Endothelial cell of umbilical vein (primary cell): ENCODE measurements at regions of chr17 and their contacts with region 1.

Region 1: GRCh38 chr17:66567234-66568170 is 265.1 kb downstream of the PRKCA start:
- DNase-seq: peak; percentile 97
- H3K4me3 ChIP-seq: no peak overlapping the region
- H3K27ac ChIP-seq: peak overlapping the region; percentile 90
- H3K4me1 ChIP-seq: peaks cover 16% of the 10 kb centered on the region
- H3K27me3 ChIP-seq: no peaks in the 10 kb centered on the region
- CTCF ChIP-seq: peak; percentile 90 to 93
- POLR2A ChIP-seq: no peak

Region 2: GRCh38 chr17:65813306-65813705 is 754.2 kb before region 1 on chr17:
- CTCF ChIA-PET with region 1: no interaction called
- POLR2A ChIA-PET with region 1: no interaction called
- dilution Hi-C with region 1: no loop called
- intact Hi-C with region 1: no loop called
- DNase-seq: no peak
- H3K4me3 ChIP-seq: no peak overlapping the region
- H3K27ac ChIP-seq: no peak overlapping the region
- H3K4me1 ChIP-seq: peaks cover 5% of the 10 kb centered on the region
- H3K27me3 ChIP-seq: no peaks in the 10 kb centered on the region
- CTCF ChIP-seq: no peak
- POLR2A ChIP-seq: no peak

Region 3: DNA sequence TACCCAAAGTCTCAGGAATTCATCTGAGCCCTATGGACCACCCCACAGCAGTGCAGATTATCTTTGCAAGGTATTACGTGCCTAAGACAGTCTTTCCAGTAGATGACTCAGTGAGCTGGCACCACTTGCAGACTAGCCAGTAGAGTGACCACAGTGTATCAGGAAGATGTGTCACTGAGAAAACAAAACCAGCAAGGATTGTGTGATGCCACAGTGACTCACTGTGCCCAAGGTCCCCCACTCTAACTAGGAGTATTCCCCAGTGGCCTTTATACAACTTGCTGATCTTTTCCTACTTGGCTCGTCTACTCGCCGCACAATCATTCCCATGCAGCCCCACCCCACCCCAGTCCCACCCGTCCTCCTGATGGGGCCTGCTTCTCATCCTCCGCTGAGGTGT is 291.9 kb before region 1 on chr17:
- CTCF ChIA-PET with region 1: interaction called, 10 read pairs
- POLR2A ChIA-PET with region 1: no interaction called
- dilution Hi-C with region 1: no loop called
- intact Hi-C with region 1: loop called (anchors 1 kb)
- DNase-seq: peak; percentile 90
- H3K4me3 ChIP-seq: no peak overlapping the region
- H3K27ac ChIP-seq: peak overlapping the region; percentile 87
- H3K4me1 ChIP-seq: peaks cover 30% of the 10 kb centered on the region
- H3K27me3 ChIP-seq: no peaks in the 10 kb centered on the region
- CTCF ChIP-seq: no peak
- POLR2A ChIP-seq: no peak

Region 4: DNA sequence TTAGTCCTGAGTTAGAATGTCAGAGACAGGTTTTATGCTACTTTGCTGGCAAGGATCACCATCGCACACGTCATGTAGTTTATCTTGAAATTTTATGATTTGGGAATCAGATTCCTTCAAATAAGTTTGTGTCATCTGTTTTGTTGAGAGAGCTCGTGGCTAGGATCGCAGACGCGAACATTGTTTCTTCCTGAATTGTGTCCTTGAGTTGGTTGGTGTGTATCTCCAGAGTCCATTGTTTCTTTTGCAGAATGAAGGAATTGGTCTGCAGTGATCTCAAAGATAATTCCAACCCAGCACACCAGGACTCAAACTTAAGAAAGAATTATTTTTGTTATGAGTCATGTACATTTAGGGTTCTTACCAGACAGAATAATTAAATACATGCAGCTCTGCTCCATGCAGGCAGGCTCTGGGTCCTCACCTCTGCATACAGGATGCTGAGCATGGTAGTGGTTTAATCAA is 213.5 kb before region 1 on chr17:
- CTCF ChIA-PET with region 1: interaction called, 7 read pairs
- POLR2A ChIA-PET with region 1: no interaction called
- dilution Hi-C with region 1: no loop called
- intact Hi-C with region 1: loop called (anchors 2 kb)
- DNase-seq: peak; percentile 79
- H3K4me3 ChIP-seq: no peak overlapping the region
- H3K27ac ChIP-seq: peak overlapping the region; percentile 9
- H3K4me1 ChIP-seq: peaks cover 28% of the 10 kb centered on the region
- H3K27me3 ChIP-seq: no peaks in the 10 kb centered on the region
- CTCF ChIP-seq: no peak
- POLR2A ChIP-seq: no peak

Region 5: GRCh38 chr17:66466840-66467367 is 100.6 kb before region 1 on chr17:
- CTCF ChIA-PET with region 1: interaction called, 9 read pairs
- POLR2A ChIA-PET with region 1: no interaction called
- dilution Hi-C with region 1: no loop called
- intact Hi-C with region 1: loop called (anchors 1 kb)
- DNase-seq: peak; percentile 94
- H3K4me3 ChIP-seq: peak overlapping the region in 2 of 3 experiments; percentile 20 to 24
- H3K27ac ChIP-seq: peak overlapping the region; percentile 64
- H3K4me1 ChIP-seq: peaks cover 44% of the 10 kb centered on the region
- H3K27me3 ChIP-seq: no peaks in the 10 kb centered on the region
- CTCF ChIP-seq: no peak
- POLR2A ChIP-seq: peak; percentile 48

Region 6: GRCh38 chr17:66580184-66580955 is 12.9 kb after region 1 on chr17:
- CTCF ChIA-PET with region 1: interaction called, 10 read pairs
- POLR2A ChIA-PET with region 1: no interaction called
- dilution Hi-C with region 1: no loop called
- intact Hi-C with region 1: loop called (anchors 1 kb)
- DNase-seq: peak; percentile 66
- H3K4me3 ChIP-seq: no peak overlapping the region
- H3K27ac ChIP-seq: peak overlapping the region; percentile 72
- H3K4me1 ChIP-seq: peaks cover 30% of the 10 kb centered on the region
- H3K27me3 ChIP-seq: no peaks in the 10 kb centered on the region
- CTCF ChIP-seq: no peak
- POLR2A ChIP-seq: no peak

Region 7: DNA sequence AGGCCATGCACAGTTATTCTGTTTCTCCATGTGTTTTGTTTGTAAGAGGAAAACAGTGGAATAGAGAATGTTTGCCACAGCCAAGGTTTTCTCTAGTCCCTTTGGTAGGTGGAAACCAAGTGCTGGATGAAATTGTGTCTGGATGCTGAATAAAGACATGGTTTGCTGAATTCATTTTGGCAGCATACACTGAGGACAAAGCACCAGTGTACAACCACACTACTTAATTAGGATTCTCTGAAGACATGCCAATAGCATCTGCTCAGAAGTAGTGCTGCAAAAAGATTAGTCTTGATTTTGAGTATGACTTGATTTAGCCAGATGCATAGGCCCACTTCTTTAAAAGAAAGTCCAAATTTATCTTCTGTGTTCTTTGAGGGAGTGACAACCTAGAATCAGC is 36.9 kb after region 1 on chr17:
- CTCF ChIA-PET with region 1: no interaction called
- POLR2A ChIA-PET with region 1: no interaction called
- dilution Hi-C with region 1: no loop called
- intact Hi-C with region 1: no loop called
- DNase-seq: no peak
- H3K4me3 ChIP-seq: no peak overlapping the region
- H3K27ac ChIP-seq: no peak overlapping the region
- H3K4me1 ChIP-seq: peaks cover 5% of the 10 kb centered on the region
- H3K27me3 ChIP-seq: no peaks in the 10 kb centered on the region
- CTCF ChIP-seq: no peak
- POLR2A ChIP-seq: no peak